ENCODE measurements at regions of chr6 and their contacts with region 1.

Region 1: DNA sequence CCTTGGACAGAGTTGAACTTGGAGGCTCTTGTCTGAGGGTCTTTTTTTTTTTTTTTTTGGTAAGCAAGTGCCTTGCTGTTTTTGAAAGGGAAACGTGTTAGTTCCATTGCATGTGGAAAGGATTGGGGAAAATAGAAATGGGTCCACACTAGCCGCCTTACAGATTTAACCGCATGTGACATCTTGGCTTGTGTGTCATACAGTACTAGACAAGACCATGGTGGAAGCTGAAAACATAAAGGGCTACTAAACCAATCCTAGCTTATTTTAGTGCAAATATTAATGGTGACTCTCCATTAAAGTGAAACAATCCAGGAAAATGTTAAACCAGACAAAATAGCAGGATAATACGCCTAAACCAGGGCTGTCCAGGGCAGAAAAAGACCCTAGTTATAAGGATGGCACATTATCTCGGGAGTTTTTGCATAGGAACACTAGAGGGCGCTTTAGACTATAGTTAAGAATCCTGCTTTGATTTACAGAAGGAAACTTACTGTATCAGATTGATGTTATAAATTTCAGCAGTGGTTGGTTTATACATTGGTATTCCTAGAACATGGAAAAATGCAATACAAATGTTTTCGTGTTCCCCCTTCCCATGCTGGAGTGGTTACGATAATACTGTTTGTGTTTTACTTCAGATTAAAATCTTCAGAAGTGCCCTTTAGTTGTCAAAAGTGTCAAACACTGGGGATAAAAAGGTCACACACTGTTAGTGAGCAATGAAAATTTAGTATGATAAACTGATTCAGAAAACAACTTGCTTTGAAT is 59.8 kb upstream of the DEK start:
- DNase-seq: peak; percentile 64
- H3K4me3 Mint-ChIP-seq: no peak overlapping the region
- H3K27ac Mint-ChIP-seq: no peak overlapping the region
- H3K4me1 Mint-ChIP-seq: peaks cover 14% of the 10 kb centered on the region
- H3K27me3 Mint-ChIP-seq: no peaks in the 10 kb centered on the region
- CTCF ChIP-seq: peak; percentile 51

Region 2: GRCh38 chr6:18334251-18334650 is 10.1 kb after region 1 on chr6:
- CTCF ChIA-PET with region 1: interaction called, 12 read pairs
- POLR2A ChIA-PET with region 1: interaction called, 5 read pairs
- intact Hi-C with region 1: no loop called
- DNase-seq: no peak
- H3K4me3 Mint-ChIP-seq: no peak overlapping the region
- H3K27ac Mint-ChIP-seq: no peak overlapping the region
- H3K4me1 Mint-ChIP-seq: no peaks in the 10 kb centered on the region
- H3K27me3 Mint-ChIP-seq: no peaks in the 10 kb centered on the region
- CTCF ChIP-seq: no peak

Region 3: DNA sequence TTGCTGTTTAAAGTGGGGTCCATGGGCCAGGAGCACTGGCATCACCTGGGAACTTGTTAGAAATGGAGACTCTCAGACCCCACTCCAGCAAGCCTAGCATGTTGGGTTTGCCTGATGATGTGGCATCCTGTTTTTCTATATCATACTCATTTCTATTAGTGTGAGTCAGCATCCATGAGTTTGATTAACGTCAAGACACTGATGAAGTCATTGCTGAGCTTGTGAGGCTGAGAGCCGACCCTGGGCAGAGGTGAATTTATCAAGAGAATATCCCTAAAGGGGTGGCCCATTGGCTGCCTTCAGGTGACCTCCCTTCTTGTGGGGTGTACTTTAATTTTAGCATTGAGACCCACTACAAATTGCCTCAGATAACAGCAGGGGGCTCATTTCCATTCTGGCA is 19.6 kb after region 1 on chr6:
- CTCF ChIA-PET with region 1: interaction called, 7 read pairs
- POLR2A ChIA-PET with region 1: interaction called, 22 read pairs
- intact Hi-C with region 1: no loop called
- DNase-seq: peak; percentile 47
- H3K4me3 Mint-ChIP-seq: no peak overlapping the region
- H3K27ac Mint-ChIP-seq: peak overlapping the region; percentile 83
- H3K4me1 Mint-ChIP-seq: peaks cover 32% of the 10 kb centered on the region
- H3K27me3 Mint-ChIP-seq: no peaks in the 10 kb centered on the region
- CTCF ChIP-seq: no peak

Region 4: DNA sequence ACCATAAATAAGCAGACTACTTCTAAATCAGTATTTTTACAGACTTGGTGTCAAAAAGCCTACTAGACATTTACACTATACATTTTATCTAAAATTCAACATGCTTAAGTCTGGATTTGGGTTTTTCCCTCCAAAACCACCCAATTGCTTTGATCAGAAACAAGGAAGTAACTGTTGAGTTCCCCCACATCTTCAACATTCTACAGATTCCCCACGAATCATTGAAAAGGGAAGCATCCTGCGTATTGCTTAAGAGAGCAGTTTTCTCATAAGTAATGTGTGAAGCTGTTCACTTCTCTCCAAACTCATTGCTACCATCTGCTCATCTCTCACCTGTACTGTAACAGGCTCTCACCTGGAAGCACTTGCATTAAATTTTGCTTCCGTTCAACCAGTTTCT is 26.6 kb after region 1 on chr6:
- CTCF ChIA-PET with region 1: interaction called, 7 read pairs
- POLR2A ChIA-PET with region 1: interaction called, 29 read pairs
- intact Hi-C with region 1: no loop called
- DNase-seq: no peak
- H3K4me3 Mint-ChIP-seq: no peak overlapping the region
- H3K27ac Mint-ChIP-seq: peak overlapping the region; percentile 86
- H3K4me1 Mint-ChIP-seq: peaks cover 41% of the 10 kb centered on the region
- H3K27me3 Mint-ChIP-seq: no peaks in the 10 kb centered on the region
- CTCF ChIP-seq: no peak

Region 5: DNA sequence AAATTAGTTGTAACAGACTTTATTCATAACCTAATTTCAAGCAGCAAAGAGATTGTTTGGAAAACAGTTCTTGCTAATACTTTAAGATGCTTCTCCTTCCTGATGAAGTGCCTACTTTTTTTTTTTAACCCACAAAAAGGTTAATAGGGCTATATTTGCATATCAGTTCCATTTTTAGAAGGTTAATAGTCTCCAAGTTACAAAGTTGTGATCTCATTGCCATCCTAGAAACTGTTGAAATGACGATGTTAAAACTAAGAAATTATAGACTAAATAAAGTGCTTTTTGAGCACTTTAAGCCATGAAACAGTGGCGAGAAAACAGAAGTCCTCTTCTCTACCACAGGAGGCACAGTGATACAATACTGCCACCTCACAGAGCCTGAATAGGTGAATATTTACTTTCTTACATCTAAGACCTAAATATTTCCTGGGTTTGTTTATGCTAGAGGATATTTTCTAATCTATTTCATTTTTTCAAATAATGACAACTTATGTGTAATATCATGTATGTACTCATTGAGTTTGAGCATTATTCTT is 68.3 kb after region 1 on chr6:
- CTCF ChIA-PET with region 1: interaction called, 23 read pairs
- POLR2A ChIA-PET with region 1: interaction called, 18 read pairs
- intact Hi-C with region 1: loop called (anchors 1 kb)
- DNase-seq: no peak
- H3K4me3 Mint-ChIP-seq: no peak overlapping the region
- H3K27ac Mint-ChIP-seq: no peak overlapping the region
- H3K4me1 Mint-ChIP-seq: peaks cover 35% of the 10 kb centered on the region
- H3K27me3 Mint-ChIP-seq: no peaks in the 10 kb centered on the region
- CTCF ChIP-seq: no peak

Region 6: GRCh38 chr6:18457065-18457812 is 133.1 kb after region 1 on chr6:
- CTCF ChIA-PET with region 1: interaction called, 10 read pairs
- POLR2A ChIA-PET with region 1: no interaction called
- intact Hi-C with region 1: no loop called
- DNase-seq: no peak
- H3K4me3 Mint-ChIP-seq: no peak overlapping the region
- H3K27ac Mint-ChIP-seq: peak overlapping the region; percentile 37
- H3K4me1 Mint-ChIP-seq: peaks cover 18% of the 10 kb centered on the region
- H3K27me3 Mint-ChIP-seq: no peaks in the 10 kb centered on the region
- CTCF ChIP-seq: no peak